ENCODE measurements at regions of chr15 and their contacts with region 1.

Region 1: DNA sequence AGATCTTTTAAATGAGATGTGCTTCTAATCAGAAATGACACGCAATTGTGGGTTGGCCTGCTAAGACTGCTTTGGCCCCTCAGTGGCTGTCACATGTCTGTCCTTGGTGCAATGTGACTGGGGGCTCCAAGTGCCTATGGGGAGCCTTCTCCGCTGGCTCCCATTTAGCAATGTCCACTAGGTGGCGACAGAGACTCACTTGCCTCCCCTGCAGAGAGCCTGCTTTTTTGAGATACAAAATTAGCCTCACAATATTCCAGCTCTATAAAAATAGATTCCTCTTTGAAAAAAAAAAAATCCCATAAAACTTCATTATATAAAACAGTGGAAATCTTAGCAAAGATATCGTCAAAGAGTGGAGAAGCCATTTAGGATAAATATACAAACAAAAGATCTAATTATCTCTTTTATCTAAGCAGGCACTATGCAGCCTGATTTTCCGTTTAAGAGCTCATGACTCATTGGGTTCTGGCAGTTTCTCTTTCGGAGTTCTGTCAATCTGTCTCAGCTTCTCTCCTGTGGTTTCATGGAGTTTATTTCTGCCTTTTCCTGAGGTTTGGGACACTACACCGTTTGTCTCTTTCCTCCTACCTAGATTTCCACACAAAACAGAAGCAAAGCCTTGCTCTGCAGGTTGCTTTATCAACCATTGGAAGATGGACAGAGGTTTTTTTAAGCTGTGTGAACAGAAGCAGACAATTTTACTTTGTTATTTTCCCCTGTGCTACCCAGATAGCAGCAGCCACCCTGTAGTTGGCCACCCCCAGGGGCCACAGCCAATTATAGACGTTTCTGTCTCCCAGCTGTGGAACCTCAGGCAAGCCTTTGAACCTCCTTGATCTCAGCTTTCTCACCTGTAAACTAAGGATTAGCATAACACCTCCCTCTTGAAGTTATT is 68.4 kb upstream of the TNFAIP8L3 start:
- DNase-seq: peak; percentile 70
- ATAC-seq: peak; percentile 94 to 95

Region 2: GRCh38 chr15:51192521-51193280 is 29.6 kb after region 1 on chr15:
- intact Hi-C with region 1: loop called (anchors 1 to 5 kb)
- DNase-seq: peak; percentile 88
- ATAC-seq: peak; percentile 89 to 93

Region 3: GRCh38 chr15:51198701-51199232 is 35.7 kb after region 1 on chr15:
- intact Hi-C with region 1: loop called in 1 of 2 experiments (anchors 5 kb)
- DNase-seq: no peak
- ATAC-seq: no peak

Region 4: DNA sequence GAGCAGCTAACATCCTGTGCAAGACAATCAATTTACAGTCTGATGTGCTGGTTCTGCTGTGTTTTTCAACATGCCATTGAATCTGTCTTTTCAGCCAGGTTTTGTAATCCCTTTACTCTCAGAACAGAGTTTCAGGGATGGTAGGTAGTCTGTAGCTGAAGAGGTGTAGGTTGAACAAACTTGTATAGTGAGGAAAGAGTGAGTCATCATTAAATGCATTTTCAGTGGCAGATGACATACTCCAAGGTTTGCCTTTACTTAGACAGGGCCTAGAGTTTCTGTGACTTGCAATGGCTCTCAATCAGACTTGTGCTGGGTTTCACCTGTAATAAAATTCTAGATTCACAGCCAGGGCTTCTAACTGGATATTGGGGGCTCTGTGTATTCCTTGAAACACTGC is 80.6 kb after region 1 on chr15:
- intact Hi-C with region 1: no loop called
- DNase-seq: no peak
- ATAC-seq: peak in 1 of 2 donors; percentile 33

Region 5: DNA sequence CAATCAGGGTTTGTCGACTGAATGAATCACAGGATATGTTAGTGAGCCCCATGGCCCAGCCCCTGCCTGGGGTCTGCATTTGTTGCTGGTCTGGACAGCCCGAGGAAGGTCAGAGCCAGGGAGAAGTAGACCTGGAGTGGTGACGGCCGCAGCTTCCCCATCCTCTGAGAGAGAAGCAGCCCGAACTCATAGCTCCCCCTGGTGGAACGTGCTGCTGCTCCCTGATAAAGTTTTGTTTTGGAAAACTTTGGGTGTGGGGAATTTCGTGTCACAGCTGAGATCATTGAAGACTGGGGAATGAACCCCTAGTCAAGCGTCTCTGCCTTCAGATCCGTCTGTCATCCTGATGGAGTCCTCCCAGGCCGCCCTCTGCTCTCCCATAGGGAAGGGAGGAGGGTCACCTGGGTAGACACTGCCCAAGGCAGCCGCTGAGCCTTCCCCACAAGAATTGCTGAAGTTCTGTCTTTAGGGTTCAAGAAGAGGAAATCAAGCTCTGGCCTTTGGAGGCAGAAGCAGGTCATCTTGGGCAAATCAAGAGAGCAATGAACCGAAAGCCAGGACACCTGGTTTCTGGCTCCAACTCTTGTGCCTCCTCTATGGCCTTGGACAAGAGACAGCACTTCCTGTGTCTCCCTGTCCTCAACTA is 238.9 kb after region 1 on chr15:
- intact Hi-C with region 1: loop called in 1 of 2 experiments (anchors 5 kb)
- DNase-seq: no peak
- ATAC-seq: peak in 1 of 2 donors; percentile 53